PC-9 (cell line): ENCODE measurements at regions of chr5 and their contacts with region 1.

Region 1: DNA sequence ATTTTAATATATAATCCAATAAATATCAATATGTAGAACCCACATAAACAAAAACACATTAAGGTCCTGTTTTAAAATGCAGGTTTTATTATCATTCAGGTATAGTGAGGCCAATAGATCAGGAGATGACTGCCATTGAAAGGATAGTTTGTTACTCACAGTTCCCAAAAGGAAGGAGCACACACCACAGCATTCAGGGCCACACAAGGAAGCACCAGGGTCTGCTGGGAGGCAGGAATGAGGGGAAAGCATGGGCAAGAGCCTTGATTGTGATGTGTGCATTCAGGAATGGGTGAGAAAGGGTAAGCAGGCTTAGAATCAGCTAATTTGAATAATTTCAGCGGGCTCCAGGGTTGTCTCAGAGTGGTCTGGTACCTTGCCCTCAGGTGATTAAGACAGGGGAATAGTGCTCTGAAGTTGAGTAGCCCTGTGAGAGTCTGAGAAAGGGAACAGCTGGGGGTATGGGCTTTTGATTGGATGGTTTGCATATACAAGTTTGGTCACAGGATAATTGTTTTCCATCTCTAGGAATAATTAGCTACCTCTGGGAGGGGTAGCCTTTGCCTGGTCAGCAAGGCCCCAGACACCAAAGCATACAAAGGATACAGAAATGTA is 19.8 kb upstream of the OTULIN start:
- DNase-seq: no peak
- H3K4me3 ChIP-seq: no peak overlapping the region
- H3K27ac ChIP-seq: no peak overlapping the region
- H3K4me1 ChIP-seq: no peaks in the 10 kb centered on the region
- H3K27me3 ChIP-seq: peaks cover 3% of the 10 kb centered on the region
- CTCF ChIP-seq: no peak

Region 2: DNA sequence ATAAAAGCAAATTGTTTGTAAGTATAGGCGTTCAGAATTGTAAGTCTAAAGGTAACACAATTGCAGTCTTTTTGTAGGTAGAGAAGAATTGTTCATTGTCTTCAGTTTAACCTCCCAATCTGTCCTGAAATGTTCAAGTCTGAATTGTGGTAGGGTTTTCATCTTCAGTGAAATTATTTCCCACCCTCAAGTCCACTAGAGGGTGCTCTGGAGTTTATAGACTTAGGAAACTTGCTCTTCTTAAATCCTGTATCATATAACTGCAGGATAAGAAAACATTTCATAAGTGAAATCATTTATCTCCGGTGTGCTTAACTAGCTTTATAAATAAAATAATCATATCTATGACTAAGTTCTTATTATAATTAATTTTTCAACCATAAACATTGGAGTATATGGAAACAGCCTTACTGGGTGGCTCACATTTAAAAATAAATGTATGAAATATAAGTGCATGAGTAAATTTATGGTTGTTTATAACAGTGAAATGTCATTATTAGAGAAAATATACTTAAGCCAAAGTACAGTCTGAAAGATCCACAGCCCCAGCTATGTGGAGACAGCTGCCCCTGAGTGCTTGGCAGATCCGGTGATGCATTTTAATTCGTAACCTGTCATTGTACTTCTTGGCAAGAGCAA is 245.6 kb before region 1 on chr5:
- CTCF ChIA-PET with region 1: interaction called, 11 read pairs
- POLR2A ChIA-PET with region 1: no interaction called
- intact Hi-C with region 1: loop called (anchors 1 kb)
- DNase-seq: peak in 1 of 2 experiments; percentile 46
- H3K4me3 ChIP-seq: no peak overlapping the region
- H3K27ac ChIP-seq: no peak overlapping the region
- H3K4me1 ChIP-seq: peaks cover 10% of the 10 kb centered on the region; the same call in 1 of the 2 replicates
- H3K27me3 ChIP-seq: no peaks in the 10 kb centered on the region
- CTCF ChIP-seq: peak; percentile 83

Region 3: GRCh38 chr5:14608169-14608568 is 36.6 kb before region 1 on chr5:
- CTCF ChIA-PET with region 1: interaction called, 12 read pairs
- POLR2A ChIA-PET with region 1: no interaction called
- intact Hi-C with region 1: no loop called
- DNase-seq: no peak
- H3K4me3 ChIP-seq: no peak overlapping the region
- H3K27ac ChIP-seq: no peak overlapping the region
- H3K4me1 ChIP-seq: no peaks in the 10 kb centered on the region
- H3K27me3 ChIP-seq: no peaks in the 10 kb centered on the region
- CTCF ChIP-seq: no peak

Region 4: GRCh38 chr5:14778792-14779070 is 134.0 kb after region 1 on chr5:
- CTCF ChIA-PET with region 1: interaction called, 19 read pairs
- POLR2A ChIA-PET with region 1: no interaction called
- intact Hi-C with region 1: no loop called
- DNase-seq: no peak
- H3K4me3 ChIP-seq: no peak overlapping the region
- H3K27ac ChIP-seq: no peak overlapping the region
- H3K4me1 ChIP-seq: no peaks in the 10 kb centered on the region
- H3K27me3 ChIP-seq: peaks cover 14% of the 10 kb centered on the region; the same call in 1 of the 2 replicates
- CTCF ChIP-seq: no peak